ENCODE measurements at regions of chr17 and their contacts with region 1.

Region 1: GRCh38 chr17:58328195-58329034 is at the start of gene TSPOAP1:
- DNase-seq: no peak
- H3K27ac ChIP-seq: no peak within 1 kb of the TSS
- CTCF ChIP-seq: no peak

Region 2: DNA sequence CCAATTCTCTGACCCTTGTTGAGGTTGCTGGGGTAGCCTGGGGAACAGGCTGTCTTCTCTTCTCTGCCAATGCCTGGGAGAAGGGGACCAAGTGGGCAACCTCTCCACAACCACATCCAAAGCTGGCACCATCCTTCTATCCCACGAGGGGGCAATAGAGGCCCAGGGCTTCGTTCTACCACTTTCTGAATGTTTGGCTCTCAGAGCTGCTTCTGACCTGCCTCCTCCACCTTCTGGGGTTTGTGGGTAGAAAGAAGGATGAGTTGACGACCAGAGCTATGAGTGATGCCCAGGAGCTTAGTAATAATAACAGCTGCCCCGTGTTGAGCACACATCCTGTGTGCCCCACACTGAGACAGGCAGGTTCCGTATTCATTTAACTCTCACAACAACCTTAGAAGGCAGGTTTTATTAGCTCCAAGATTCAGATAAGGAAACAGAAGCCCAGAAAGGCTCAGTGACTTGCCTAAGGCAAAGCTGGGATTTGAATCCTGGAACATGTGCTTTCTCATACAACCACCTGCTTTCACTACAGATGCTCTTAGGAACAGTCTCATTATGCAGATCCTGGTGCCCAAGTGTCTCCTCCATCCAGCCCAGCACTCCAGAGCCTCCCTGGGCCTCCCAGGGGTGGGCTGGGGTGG is 10.9 kb before region 1 on chr17:
- CTCF ChIA-PET with region 1: interaction called, 14 read pairs
- POLR2A ChIA-PET with region 1: no interaction called
- DNase-seq: peak; percentile 75
- H3K27ac ChIP-seq: no peak overlapping the region
- CTCF ChIP-seq: peak; percentile 75

Measured in RWPE1 (cell line).